ENCODE measurements at regions of chr10 and their contacts with region 1.

Region 1: GRCh38 chr10:58531084-58531695 is 18.5 kb downstream of the BICC1 start:
- DNase-seq: peak in 3 of 5 donors; percentile 21 to 37 (median 26)
- ATAC-seq: no peak
- H3K4me3 ChIP-seq: no peak overlapping the region
- H3K27ac ChIP-seq: no peak overlapping the region
- H3K4me1 ChIP-seq: no peaks in the 10 kb centered on the region
- H3K27me3 ChIP-seq: no peaks in the 10 kb centered on the region
- CTCF ChIP-seq: peak; percentile 44 to 73 (median 59)
- POLR2A ChIP-seq: no peak

Region 2: DNA sequence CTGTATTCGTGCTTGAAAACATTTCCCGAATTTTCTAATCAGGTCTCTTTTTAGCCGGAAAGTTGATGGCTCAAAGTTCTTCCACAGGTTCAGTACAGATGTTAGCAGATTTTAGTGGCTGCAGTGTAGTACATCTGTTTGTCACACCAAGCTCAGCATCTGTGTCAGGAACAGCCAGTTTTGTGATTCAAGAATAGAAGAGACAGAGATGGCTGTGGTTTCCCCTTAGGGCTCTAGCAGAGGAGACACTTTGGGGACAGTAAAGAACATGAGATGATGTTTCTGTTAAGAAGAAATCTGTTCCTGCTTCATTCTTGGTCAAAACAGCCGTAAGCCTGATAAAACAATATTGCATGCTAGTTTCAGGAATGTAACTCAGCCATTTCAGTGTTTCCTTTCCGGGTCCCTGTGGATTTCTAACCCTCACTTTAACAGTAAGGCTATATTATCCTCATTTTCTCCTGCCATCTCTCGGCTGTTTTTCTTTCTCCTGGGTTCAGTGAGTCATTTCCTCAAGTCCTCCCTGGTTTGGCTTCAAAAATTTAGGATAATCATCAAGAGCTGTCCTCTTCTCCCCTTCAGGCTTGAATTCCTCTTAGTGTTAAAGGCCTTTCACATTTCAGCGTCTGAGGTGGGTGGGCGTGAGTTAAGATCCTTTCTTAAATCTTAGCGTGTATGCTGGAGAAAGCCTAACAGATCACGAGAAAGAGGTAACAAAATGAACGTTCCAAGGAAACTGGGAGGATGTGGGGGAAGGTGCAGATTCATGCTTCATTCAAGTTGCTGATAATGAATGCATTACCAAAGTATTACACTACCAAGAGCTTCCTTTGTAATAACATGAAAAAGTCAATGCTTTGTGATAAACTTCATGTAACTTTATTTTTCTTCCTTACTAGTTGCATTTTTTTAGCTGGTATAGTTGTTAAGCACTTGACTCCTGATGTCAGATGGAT is 55.6 kb before region 1 on chr10:
- intact Hi-C with region 1: no loop called
- DNase-seq: no peak
- ATAC-seq: peak; percentile 61 to 84 (median 66)
- H3K4me3 ChIP-seq: peak overlapping the region in 8 of 12 donors; percentile 8 to 45 (median 27)
- H3K27ac ChIP-seq: peak overlapping the region; percentile 13 to 78 (median 56)
- H3K4me1 ChIP-seq: peaks cover 0 to 19% (median 0%) of the 10 kb centered on the region in 12 donors
- H3K27me3 ChIP-seq: peaks cover 0 to 4% (median 0%) of the 10 kb centered on the region in 9 donors
- CTCF ChIP-seq: no peak
- POLR2A ChIP-seq: no peak

Region 3: GRCh38 chr10:58608351-58608750 is 77.2 kb after region 1 on chr10:
- intact Hi-C with region 1: no loop called
- DNase-seq: no peak
- ATAC-seq: no peak
- H3K4me3 ChIP-seq: no peak overlapping the region
- H3K27ac ChIP-seq: no peak overlapping the region
- H3K4me1 ChIP-seq: peaks cover 0 to 5% (median 0%) of the 10 kb centered on the region in 12 donors
- H3K27me3 ChIP-seq: no peaks in the 10 kb centered on the region
- CTCF ChIP-seq: no peak
- POLR2A ChIP-seq: no peak

Region 4: GRCh38 chr10:58651040-58651439 is 119.8 kb after region 1 on chr10:
- intact Hi-C with region 1: loop called in 3 of 10 experiments (anchors 5 to 10 kb)
- DNase-seq: peak in 4 of 5 donors; percentile 19 to 34 (median 30)
- ATAC-seq: peak in 3 of 4 donors; percentile 49 to 80 (median 60)
- H3K4me3 ChIP-seq: no peak overlapping the region
- H3K27ac ChIP-seq: peak overlapping the region in 3 of 12 donors; percentile 19 to 45 (median 21)
- H3K4me1 ChIP-seq: peaks cover 0 to 42% (median 4%) of the 10 kb centered on the region in 12 donors
- H3K27me3 ChIP-seq: no peaks in the 10 kb centered on the region
- CTCF ChIP-seq: no peak
- POLR2A ChIP-seq: no peak

Measured in heart left ventricle (tissue), 16 donors.